ENCODE measurements at regions of chr5 and their contacts with region 1.

Region 1: DNA sequence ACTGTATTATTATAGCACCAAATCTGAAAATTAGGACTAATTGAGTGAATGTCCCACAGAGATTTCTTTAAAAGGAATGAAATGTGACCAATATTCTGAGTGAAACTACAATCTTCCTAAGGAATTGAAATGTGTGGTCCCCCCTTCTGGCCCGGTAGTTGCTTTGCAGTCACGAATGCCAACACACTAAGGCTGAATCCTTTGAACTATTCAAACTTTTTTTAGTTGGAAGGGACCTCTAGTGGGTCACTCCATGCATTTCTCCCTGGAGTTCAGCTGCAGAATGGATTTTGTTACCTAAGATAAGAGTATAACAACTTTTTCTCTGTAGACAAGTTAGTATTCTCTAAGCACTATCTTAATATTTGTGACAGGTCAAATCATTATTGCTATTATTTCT is 2.8 kb downstream of the CDH6 start:
- DNase-seq: no peak
- H3K4me3 ChIP-seq: no peak overlapping the region
- H3K27ac ChIP-seq: no peak overlapping the region
- H3K4me1 ChIP-seq: no peaks in the 10 kb centered on the region
- H3K27me3 ChIP-seq: no peaks in the 10 kb centered on the region
- CTCF ChIP-seq: no peak
- EP300 ChIP-seq: no peak
- POLR2A ChIP-seq: no peak

Region 2: GRCh38 chr5:30874241-30875034 is 321.9 kb before region 1 on chr5:
- intact Hi-C with region 1: no loop called
- DNase-seq: no peak
- H3K4me3 ChIP-seq: no peak overlapping the region
- H3K27ac ChIP-seq: no peak overlapping the region
- H3K4me1 ChIP-seq: no peaks in the 10 kb centered on the region
- H3K27me3 ChIP-seq: no peaks in the 10 kb centered on the region
- CTCF ChIP-seq: no peak
- EP300 ChIP-seq: no peak
- POLR2A ChIP-seq: no peak

Region 3: GRCh38 chr5:31215236-31215635 is 18.9 kb after region 1 on chr5:
- intact Hi-C with region 1: loop called in 1 of 4 experiments (anchors 1 kb)
- DNase-seq: no peak
- H3K4me3 ChIP-seq: no peak overlapping the region
- H3K27ac ChIP-seq: no peak overlapping the region
- H3K4me1 ChIP-seq: no peaks in the 10 kb centered on the region
- H3K27me3 ChIP-seq: no peaks in the 10 kb centered on the region
- CTCF ChIP-seq: no peak
- EP300 ChIP-seq: no peak
- POLR2A ChIP-seq: no peak

Region 4: DNA sequence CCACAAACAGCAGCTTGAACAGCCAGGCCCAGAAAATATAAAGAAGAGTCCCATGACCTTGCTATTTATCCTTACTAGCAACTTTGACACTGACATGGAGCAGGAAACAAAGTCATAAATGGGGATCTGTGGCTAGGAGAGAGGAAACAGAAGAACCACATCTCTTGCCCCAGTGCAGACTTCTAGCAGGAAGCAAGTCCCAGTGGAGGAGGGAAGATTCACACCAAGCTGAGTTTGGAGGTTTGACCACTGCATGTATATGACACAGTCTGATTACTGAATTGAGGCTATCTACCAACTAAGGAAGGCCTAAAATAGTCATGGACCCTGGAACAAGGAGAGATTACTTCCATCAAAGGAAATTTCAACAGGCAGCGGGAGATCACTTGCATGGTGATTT is 48.6 kb after region 1 on chr5:
- intact Hi-C with region 1: no loop called
- DNase-seq: no peak
- H3K4me3 ChIP-seq: no peak overlapping the region
- H3K27ac ChIP-seq: no peak overlapping the region
- H3K4me1 ChIP-seq: no peaks in the 10 kb centered on the region
- H3K27me3 ChIP-seq: no peaks in the 10 kb centered on the region
- CTCF ChIP-seq: no peak
- EP300 ChIP-seq: no peak
- POLR2A ChIP-seq: no peak

Region 5: DNA sequence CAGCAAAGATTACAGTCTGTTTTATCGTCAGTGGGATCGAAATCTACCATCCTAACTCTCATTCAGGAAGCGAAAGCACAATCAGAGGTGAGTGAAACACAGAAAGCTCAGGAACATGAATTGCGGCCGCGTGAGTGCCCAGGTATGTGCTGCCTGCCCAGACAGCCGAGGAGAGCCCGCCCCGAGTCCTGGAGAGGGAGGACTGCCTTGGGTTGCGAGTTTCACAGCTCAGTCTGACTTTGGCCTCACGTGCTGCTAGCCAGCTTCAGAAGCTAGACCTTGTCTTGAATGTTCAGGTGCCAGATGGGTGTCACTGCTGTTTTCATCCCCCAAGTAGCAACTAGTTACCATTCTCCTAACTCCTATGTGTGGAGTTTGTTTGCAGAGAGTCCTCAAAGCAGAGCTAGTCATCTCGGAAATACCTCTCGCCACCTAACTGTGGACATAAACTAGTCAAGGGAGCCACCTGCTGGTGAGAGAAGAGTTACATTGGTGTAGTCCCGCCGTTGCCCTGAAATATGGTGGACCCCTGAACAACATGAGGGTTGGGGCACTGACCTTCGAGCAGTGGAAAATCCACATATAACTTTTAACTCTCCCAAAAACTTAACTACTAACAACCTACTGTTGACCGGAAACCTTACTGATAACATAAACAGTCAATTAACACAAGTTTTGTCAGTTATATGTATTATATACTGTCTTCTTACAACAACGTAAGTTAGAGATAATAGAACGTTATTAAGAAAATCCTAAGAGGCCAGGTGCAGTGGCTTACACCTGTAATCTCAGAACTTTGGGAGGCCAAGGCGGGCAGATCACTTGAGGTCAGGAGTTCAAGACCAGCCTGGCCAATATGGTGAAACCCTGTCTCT is 896.9 kb after region 1 on chr5:
- intact Hi-C with region 1: no loop called
- DNase-seq: peak; percentile 59 to 83 (median 73)
- H3K4me3 ChIP-seq: no peak overlapping the region
- H3K27ac ChIP-seq: no peak overlapping the region
- H3K4me1 ChIP-seq: peaks cover 22% of the 10 kb centered on the region
- H3K27me3 ChIP-seq: no peaks in the 10 kb centered on the region
- CTCF ChIP-seq: peak; percentile 32 to 90 (median 87)
- EP300 ChIP-seq: no peak
- POLR2A ChIP-seq: no peak

Measured in ovary (tissue), 10 donors.